PC-9 (cell line): ENCODE measurements at regions of chr17 and their contacts with region 1.

Region 1: GRCh38 chr17:22600644-22601303 is 908.5 kb downstream of the KCNJ18 start:
- DNase-seq: no peak
- H3K4me3 ChIP-seq: no peak overlapping the region
- H3K27ac ChIP-seq: no peak overlapping the region
- H3K4me1 ChIP-seq: no peaks in the 10 kb centered on the region
- H3K27me3 ChIP-seq: no peaks in the 10 kb centered on the region
- CTCF ChIP-seq: peak; percentile 72

Region 2: GRCh38 chr17:22374741-22375140 is 226.0 kb before region 1 on chr17:
- CTCF ChIA-PET with region 1: no interaction called
- POLR2A ChIA-PET with region 1: no interaction called
- intact Hi-C with region 1: no loop called
- DNase-seq: no peak
- H3K4me3 ChIP-seq: no peak overlapping the region
- H3K27ac ChIP-seq: no peak overlapping the region
- H3K4me1 ChIP-seq: no peaks in the 10 kb centered on the region
- H3K27me3 ChIP-seq: peaks cover 3% of the 10 kb centered on the region
- CTCF ChIP-seq: no peak

Region 3: GRCh38 chr17:22669721-22670120 is 68.9 kb after region 1 on chr17:
- CTCF ChIA-PET with region 1: no interaction called
- POLR2A ChIA-PET with region 1: no interaction called
- intact Hi-C with region 1: loop called (anchors 10 kb)
- DNase-seq: no peak
- H3K4me3 ChIP-seq: no peak overlapping the region
- H3K27ac ChIP-seq: no peak overlapping the region
- H3K4me1 ChIP-seq: no peaks in the 10 kb centered on the region
- H3K27me3 ChIP-seq: no peaks in the 10 kb centered on the region
- CTCF ChIP-seq: no peak